WTC11 (cell line): ENCODE measurements at regions of chr5 and their contacts with region 1.

Region 1: GRCh38 chr5:446864-447263 is 3.9 kb downstream of the EXOC3 start:
- DNase-seq: peak; percentile 13
- ATAC-seq: peak; percentile 26; the same call in 1 of the 2 replicates
- H3K4me3 Mint-ChIP-seq: no peak overlapping the region
- H3K27ac Mint-ChIP-seq: no peak overlapping the region
- H3K4me1 Mint-ChIP-seq: peaks cover 14% of the 10 kb centered on the region
- H3K27me3 Mint-ChIP-seq: peaks cover under 1% of the 10 kb centered on the region
- CTCF ChIP-seq: peak; percentile 41; the same call in 1 of the 2 replicates

Region 2: GRCh38 chr5:337563-338130 is 109.2 kb before region 1 on chr5:
- CTCF ChIA-PET with region 1: interaction called, 12 read pairs
- POLR2A ChIA-PET with region 1: no interaction called
- DNase-seq: no peak
- ATAC-seq: peak; percentile 97
- H3K4me3 Mint-ChIP-seq: no peak overlapping the region
- H3K27ac Mint-ChIP-seq: no peak overlapping the region
- H3K4me1 Mint-ChIP-seq: 0 out of 2 replicates have a peak, but pooled peaks cover 4% of the 10 kb centered on the region
- H3K27me3 Mint-ChIP-seq: peaks cover 11% of the 10 kb centered on the region
- CTCF ChIP-seq: no peak

Region 3: GRCh38 chr5:418681-419121 is 28.2 kb before region 1 on chr5:
- CTCF ChIA-PET with region 1: interaction called, 20 read pairs
- POLR2A ChIA-PET with region 1: no interaction called
- DNase-seq: peak; percentile 17
- ATAC-seq: no peak
- H3K4me3 Mint-ChIP-seq: no peak overlapping the region
- H3K27ac Mint-ChIP-seq: no peak overlapping the region
- H3K4me1 Mint-ChIP-seq: peaks cover 18% of the 10 kb centered on the region
- H3K27me3 Mint-ChIP-seq: no peaks in the 10 kb centered on the region; the same call in 1 of the 2 replicates
- CTCF ChIP-seq: no peak

Region 4: DNA sequence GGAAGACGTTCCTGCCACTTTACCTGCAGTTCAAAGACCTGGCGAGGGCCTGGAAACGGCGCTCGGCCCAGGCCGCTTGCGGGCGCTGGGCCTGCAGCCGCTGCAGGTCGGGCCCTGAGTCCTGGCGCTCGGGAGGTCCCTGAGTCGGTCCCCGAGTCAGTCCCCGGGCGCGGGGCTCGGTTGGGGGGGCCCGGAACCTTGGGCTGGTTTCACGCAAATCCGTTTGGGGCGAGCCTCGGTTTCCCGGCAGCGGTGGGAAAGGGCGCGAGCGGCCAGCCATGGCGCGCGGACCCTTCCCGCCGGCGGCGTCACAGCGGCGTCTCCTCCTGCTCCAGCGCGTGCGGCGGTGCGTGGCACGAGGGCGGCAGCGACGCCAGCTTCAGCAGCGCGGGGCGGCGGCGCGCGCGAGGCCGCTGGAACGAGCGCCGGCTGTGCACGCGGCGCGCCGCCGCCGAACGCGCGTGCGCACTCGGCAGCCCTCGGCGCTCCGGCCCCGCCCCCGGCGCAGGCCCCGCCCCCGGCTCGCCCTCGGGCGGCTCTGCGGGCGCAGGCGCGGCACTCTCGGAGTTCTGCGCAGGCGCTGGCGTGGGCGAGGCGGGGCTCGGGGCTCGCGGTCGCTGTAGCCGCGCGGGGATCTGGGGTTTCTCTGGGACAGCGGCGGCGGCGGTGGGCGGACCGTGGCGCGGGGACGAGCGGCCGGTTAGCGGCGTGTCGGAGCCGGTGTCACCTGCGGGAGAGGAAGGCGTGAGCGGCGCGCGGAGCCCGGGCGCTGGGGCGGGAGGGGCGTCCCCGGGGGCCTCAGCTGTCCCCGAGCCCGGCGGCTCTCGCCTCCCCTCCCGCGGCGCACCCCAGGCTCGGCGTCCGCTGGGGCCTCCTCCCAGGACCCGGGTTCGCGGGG is 26.0 kb after region 1 on chr5:
- CTCF ChIA-PET with region 1: interaction called, 23 read pairs
- POLR2A ChIA-PET with region 1: no interaction called
- DNase-seq: peak; percentile 72
- ATAC-seq: peak; percentile 59
- H3K4me3 Mint-ChIP-seq: peak overlapping the region; percentile 64
- H3K27ac Mint-ChIP-seq: no peak overlapping the region
- H3K4me1 Mint-ChIP-seq: peaks cover 9% of the 10 kb centered on the region
- H3K27me3 Mint-ChIP-seq: peaks cover 49% of the 10 kb centered on the region
- CTCF ChIP-seq: no peak

Region 5: GRCh38 chr5:657570-657969 is 210.7 kb after region 1 on chr5:
- CTCF ChIA-PET with region 1: no interaction called
- POLR2A ChIA-PET with region 1: no interaction called
- DNase-seq: no peak
- ATAC-seq: no peak
- H3K4me3 Mint-ChIP-seq: no peak overlapping the region
- H3K27ac Mint-ChIP-seq: no peak overlapping the region
- H3K4me1 Mint-ChIP-seq: no peaks in the 10 kb centered on the region
- H3K27me3 Mint-ChIP-seq: no peaks in the 10 kb centered on the region
- CTCF ChIP-seq: no peak